ENCODE measurements at regions of chr14 and their contacts with region 1.

Region 1: DNA sequence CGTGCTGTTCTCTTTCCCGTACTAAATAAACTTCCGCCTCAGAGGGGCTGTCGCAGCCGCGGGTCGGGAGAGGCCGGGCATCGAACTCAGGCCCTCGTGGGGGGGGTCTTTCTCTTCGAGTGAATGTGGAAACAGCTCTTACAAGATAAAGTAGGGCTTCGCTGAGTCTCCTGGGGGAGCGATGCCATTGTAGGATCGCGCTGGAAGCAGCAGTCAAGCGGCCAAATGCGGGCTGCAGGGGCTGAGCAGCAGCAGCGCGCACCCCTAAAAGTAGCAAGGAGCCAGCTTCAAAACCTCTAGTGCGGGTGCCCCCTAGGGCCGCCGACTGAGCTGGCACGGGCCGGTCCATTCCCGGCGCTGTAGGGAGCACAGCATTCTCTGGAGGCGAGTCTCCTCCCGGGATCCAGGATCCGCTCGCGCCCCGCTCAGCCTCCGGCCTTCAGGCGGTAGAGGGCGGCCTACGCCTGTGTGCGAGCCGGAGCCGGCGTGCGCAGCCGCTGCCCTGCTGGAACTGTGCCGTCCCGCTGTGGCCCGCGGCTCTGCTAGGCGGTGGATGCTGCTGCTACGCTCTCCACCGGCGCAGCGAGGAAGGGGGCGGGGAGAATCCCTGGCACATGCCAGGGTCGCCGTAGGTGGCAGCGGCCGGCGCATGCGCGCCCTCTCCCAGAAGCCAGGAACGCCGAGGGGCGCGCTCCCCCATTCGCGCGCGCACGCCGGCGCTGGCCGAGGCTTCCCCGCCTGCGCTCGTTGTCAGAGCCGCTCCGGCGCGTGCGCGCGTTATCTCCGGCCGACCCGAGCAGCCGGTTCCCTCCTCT is at the start of gene FUT8:
- DNase-seq: peak; percentile 98
- ATAC-seq: peak; percentile 92
- H3K4me3 Mint-ChIP-seq: peak within 1 kb of the TSS; percentile 80
- H3K27ac Mint-ChIP-seq: peak within 1 kb of the TSS; percentile 88
- H3K4me1 Mint-ChIP-seq: peaks cover 31% of the 10 kb centered on the region
- H3K27me3 Mint-ChIP-seq: no peaks in the 10 kb centered on the region
- total RNA-seq, gene FUT8: 44.2 to 50.0 TPM

Region 2: GRCh38 chr14:64986578-64987571 is 425.4 kb before region 1 on chr14 and contains the start of gene FNTB:
- CTCF ChIA-PET with region 1: interaction called, 5 read pairs
- POLR2A ChIA-PET with region 1: no interaction called
- intact Hi-C with region 1: loop called (anchors 2 to 5 kb)
- DNase-seq: peak; percentile 96
- ATAC-seq: peak; percentile 96
- H3K4me3 Mint-ChIP-seq: peak within 1 kb of the TSS; percentile 82
- H3K27ac Mint-ChIP-seq: peak within 1 kb of the TSS; percentile 99
- H3K4me1 Mint-ChIP-seq: peaks cover 46% of the 10 kb centered on the region
- H3K27me3 Mint-ChIP-seq: peaks cover 5% of the 10 kb centered on the region
- total RNA-seq, gene FNTB: 18.2 to 24.9 TPM

Region 3: GRCh38 chr14:65206448-65207096 is 205.7 kb before region 1 on chr14:
- CTCF ChIA-PET with region 1: interaction called, 6 read pairs
- POLR2A ChIA-PET with region 1: no interaction called
- intact Hi-C with region 1: loop called (anchors 1 kb)
- DNase-seq: peak; percentile 51
- ATAC-seq: peak; percentile 84
- H3K4me3 Mint-ChIP-seq: peak overlapping the region; percentile 55
- H3K27ac Mint-ChIP-seq: peak overlapping the region; percentile 82
- H3K4me1 Mint-ChIP-seq: peaks cover 59% of the 10 kb centered on the region
- H3K27me3 Mint-ChIP-seq: no peaks in the 10 kb centered on the region

Region 4: GRCh38 chr14:65302571-65303189 is 109.6 kb before region 1 on chr14:
- CTCF ChIA-PET with region 1: interaction called, 4 read pairs
- POLR2A ChIA-PET with region 1: interaction called, 4 read pairs
- intact Hi-C with region 1: loop called in 1 of 2 experiments (anchors 1 kb)
- DNase-seq: peak; percentile 83
- ATAC-seq: peak; percentile 74
- H3K4me3 Mint-ChIP-seq: peak overlapping the region; percentile 37
- H3K27ac Mint-ChIP-seq: peak overlapping the region; percentile 86
- H3K4me1 Mint-ChIP-seq: peaks cover 63% of the 10 kb centered on the region
- H3K27me3 Mint-ChIP-seq: no peaks in the 10 kb centered on the region

Region 5: GRCh38 chr14:65329481-65329880 is 82.8 kb before region 1 on chr14:
- CTCF ChIA-PET with region 1: no interaction called
- POLR2A ChIA-PET with region 1: no interaction called
- intact Hi-C with region 1: no loop called
- DNase-seq: no peak
- ATAC-seq: no peak
- H3K4me3 Mint-ChIP-seq: no peak overlapping the region
- H3K27ac Mint-ChIP-seq: no peak overlapping the region
- H3K4me1 Mint-ChIP-seq: peaks cover 15% of the 10 kb centered on the region
- H3K27me3 Mint-ChIP-seq: no peaks in the 10 kb centered on the region

Region 6: GRCh38 chr14:65462411-65462810 is 50.2 kb after region 1 on chr14:
- CTCF ChIA-PET with region 1: interaction called, 12 read pairs
- POLR2A ChIA-PET with region 1: no interaction called
- intact Hi-C with region 1: loop called in 1 of 2 experiments (anchors 2 kb)
- DNase-seq: peak; percentile 48
- ATAC-seq: peak; percentile 95
- H3K4me3 Mint-ChIP-seq: no peak overlapping the region
- H3K27ac Mint-ChIP-seq: peak overlapping the region; percentile 14
- H3K4me1 Mint-ChIP-seq: peaks cover 37% of the 10 kb centered on the region
- H3K27me3 Mint-ChIP-seq: no peaks in the 10 kb centered on the region

Region 7: DNA sequence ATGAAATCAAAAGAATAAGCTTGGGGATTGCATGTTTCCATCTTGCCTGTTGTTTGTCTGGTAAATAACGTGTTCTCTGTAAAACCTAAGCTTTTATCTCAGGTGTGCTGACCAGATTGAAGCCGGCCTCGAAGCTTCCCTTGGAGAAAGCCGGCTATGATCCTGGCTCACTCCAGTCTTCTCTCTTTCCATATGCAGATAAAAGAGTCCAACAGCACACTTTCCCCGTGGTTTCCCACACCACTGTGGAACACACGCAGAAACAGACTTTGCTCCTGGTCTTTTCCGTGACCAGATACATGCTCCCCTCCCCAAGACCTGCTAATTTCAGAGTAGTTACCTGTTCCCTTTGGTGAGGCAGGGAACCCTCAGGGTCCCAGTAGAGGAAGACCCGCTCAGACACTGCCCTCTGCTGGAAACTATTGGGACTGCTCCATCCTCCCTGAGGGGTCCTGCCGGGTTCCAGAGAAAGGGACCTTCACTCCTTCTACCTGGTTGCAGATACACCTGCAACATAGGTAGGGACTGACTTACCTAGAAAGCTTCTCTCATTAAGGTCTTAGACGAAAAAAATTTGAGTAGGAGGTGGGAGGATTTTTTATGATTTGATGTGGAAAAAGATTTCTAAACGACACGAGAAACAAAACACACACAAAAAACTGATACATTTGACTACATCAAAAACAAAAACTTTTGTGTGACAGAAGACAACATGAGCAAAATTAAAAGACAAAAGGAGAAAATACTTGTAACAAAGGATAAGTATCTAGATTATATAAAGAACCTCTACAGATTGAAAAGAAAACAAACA is 658.5 kb after region 1 on chr14:
- CTCF ChIA-PET with region 1: interaction called, 10 read pairs
- POLR2A ChIA-PET with region 1: no interaction called
- intact Hi-C with region 1: loop called (anchors 1 to 5 kb)
- DNase-seq: peak; percentile 79
- ATAC-seq: peak; percentile 63
- H3K4me3 Mint-ChIP-seq: no peak overlapping the region
- H3K27ac Mint-ChIP-seq: no peak overlapping the region
- H3K4me1 Mint-ChIP-seq: no peaks in the 10 kb centered on the region
- H3K27me3 Mint-ChIP-seq: no peaks in the 10 kb centered on the region

Region 8: DNA sequence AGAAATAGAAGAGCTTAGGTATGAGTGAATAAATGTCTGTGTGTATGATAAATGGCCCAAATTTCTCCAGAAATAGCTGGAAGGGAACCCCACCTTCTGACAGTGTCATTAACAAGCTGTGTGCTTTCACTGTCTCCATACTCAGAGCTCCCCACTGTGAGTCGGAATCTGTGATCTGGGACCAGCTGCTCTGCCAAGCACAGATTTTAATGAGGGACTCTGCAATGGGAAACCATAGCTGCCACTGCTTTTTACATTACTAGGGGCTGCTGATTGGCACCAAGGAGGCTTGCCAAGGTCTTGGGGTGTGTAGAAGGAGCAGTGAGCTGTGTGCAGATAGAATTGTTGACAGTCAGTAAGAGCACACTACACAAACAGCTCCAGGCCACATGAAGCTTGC is 829.8 kb after region 1 on chr14:
- CTCF ChIA-PET with region 1: no interaction called
- POLR2A ChIA-PET with region 1: no interaction called
- intact Hi-C with region 1: no loop called
- DNase-seq: no peak
- ATAC-seq: no peak
- H3K4me3 Mint-ChIP-seq: no peak overlapping the region
- H3K27ac Mint-ChIP-seq: no peak overlapping the region
- H3K4me1 Mint-ChIP-seq: peaks cover 2% of the 10 kb centered on the region
- H3K27me3 Mint-ChIP-seq: peaks cover 6% of the 10 kb centered on the region

Measured in activated CD4-positive, alpha-beta T cell treated with anti-CD3 and anti-CD28 coated beads for 36 hours (primary cell).